Calu3 (cell line): ENCODE measurements at regions of chr3 and their contacts with region 1.

Region 1: GRCh38 chr3:156509189-156510174 is 45.4 kb downstream of the SSR3 start:
- DNase-seq: peak; percentile 22
- H3K4me3 Mint-ChIP-seq: no peak overlapping the region
- H3K27ac Mint-ChIP-seq: no peak overlapping the region
- H3K4me1 Mint-ChIP-seq: no peaks in the 10 kb centered on the region
- H3K27me3 Mint-ChIP-seq: peaks cover 16% of the 10 kb centered on the region
- CTCF ChIP-seq: peak; percentile 22

Region 2: GRCh38 chr3:155995525-155996351 is 513.7 kb before region 1 on chr3:
- CTCF ChIA-PET with region 1: no interaction called
- intact Hi-C with region 1: loop called (anchors 5 kb)
- DNase-seq: no peak
- H3K4me3 Mint-ChIP-seq: no peak overlapping the region
- H3K27ac Mint-ChIP-seq: no peak overlapping the region
- H3K4me1 Mint-ChIP-seq: peaks cover 7% of the 10 kb centered on the region
- H3K27me3 Mint-ChIP-seq: peaks cover 12% of the 10 kb centered on the region
- CTCF ChIP-seq: peak; percentile 36

Region 3: GRCh38 chr3:156174229-156174847 is 335.1 kb before region 1 on chr3:
- CTCF ChIA-PET with region 1: interaction called, 14 read pairs
- intact Hi-C with region 1: loop called (anchors 1 kb)
- DNase-seq: no peak
- H3K4me3 Mint-ChIP-seq: no peak overlapping the region
- H3K27ac Mint-ChIP-seq: no peak overlapping the region
- H3K4me1 Mint-ChIP-seq: no peaks in the 10 kb centered on the region
- H3K27me3 Mint-ChIP-seq: peaks cover 66% of the 10 kb centered on the region
- CTCF ChIP-seq: peak; percentile 9

Region 4: DNA sequence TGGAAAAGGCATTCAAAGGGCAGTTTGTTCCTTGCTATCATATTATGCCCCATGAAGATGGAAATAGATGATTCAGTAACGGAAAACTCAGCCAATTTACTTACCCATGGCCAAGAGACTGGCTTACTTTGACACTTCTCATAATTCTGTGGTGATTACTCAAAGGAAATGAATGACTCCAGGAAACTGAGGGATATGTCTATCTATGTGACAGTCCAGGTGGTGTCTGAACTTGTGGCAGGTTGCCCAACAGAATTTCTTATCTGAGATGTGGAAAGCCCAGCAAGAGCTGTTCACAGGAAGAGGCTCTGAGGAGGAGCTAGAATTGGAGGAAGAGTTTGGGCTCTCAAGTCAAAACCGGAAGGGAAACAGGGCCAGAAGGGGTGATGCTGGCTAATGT is 297.9 kb before region 1 on chr3:
- CTCF ChIA-PET with region 1: no interaction called
- intact Hi-C with region 1: no loop called
- DNase-seq: no peak
- H3K4me3 Mint-ChIP-seq: no peak overlapping the region
- H3K27ac Mint-ChIP-seq: no peak overlapping the region
- H3K4me1 Mint-ChIP-seq: no peaks in the 10 kb centered on the region
- H3K27me3 Mint-ChIP-seq: peaks cover 49% of the 10 kb centered on the region
- CTCF ChIP-seq: no peak

Region 5: DNA sequence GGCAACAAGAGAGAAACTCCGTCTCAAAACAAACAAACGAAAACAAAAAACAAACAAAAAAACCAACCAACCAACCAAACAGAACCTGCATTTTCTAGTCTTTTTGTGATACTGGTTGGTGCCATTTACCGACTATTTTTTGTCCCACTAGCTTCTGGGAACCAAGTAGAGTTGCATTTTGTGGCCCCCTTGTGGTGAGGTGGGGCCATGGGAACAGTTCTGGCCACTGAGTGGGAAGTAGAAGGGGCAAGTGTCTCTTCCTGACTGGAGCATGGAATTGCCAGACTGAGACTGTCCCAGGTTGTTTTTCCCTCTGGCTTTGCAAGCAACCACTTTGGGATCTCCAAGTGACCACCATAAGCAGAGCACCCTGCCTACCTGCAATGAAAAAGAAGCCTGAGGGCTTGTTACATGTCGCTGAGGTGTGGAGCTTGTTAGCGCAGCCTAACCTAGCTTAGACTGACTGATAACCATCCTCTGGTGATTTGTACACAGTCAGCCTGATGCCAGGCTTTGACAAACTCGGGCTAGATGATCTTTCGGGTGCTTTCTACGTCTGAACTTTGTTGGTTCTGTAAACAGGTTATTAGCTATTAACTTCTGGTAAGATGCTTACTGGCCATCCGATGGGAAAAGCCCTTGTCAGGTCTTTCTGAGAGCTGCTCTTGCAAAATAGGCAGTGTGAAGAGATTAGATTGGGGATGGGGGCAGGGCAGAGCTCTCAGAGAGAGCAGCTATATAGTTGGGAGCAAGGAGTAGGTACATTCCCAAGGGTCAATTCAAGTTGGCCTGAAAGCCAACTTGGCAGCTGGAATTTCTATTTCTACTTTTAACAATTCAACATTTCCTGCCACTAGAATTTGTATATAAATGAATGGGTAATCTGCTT is 126.8 kb before region 1 on chr3:
- CTCF ChIA-PET with region 1: interaction called, 12 read pairs
- intact Hi-C with region 1: loop called (anchors 5 kb)
- DNase-seq: peak; percentile 82
- H3K4me3 Mint-ChIP-seq: no peak overlapping the region
- H3K27ac Mint-ChIP-seq: no peak overlapping the region
- H3K4me1 Mint-ChIP-seq: no peaks in the 10 kb centered on the region
- H3K27me3 Mint-ChIP-seq: peaks cover 80% of the 10 kb centered on the region
- CTCF ChIP-seq: peak; percentile 94

Region 6: DNA sequence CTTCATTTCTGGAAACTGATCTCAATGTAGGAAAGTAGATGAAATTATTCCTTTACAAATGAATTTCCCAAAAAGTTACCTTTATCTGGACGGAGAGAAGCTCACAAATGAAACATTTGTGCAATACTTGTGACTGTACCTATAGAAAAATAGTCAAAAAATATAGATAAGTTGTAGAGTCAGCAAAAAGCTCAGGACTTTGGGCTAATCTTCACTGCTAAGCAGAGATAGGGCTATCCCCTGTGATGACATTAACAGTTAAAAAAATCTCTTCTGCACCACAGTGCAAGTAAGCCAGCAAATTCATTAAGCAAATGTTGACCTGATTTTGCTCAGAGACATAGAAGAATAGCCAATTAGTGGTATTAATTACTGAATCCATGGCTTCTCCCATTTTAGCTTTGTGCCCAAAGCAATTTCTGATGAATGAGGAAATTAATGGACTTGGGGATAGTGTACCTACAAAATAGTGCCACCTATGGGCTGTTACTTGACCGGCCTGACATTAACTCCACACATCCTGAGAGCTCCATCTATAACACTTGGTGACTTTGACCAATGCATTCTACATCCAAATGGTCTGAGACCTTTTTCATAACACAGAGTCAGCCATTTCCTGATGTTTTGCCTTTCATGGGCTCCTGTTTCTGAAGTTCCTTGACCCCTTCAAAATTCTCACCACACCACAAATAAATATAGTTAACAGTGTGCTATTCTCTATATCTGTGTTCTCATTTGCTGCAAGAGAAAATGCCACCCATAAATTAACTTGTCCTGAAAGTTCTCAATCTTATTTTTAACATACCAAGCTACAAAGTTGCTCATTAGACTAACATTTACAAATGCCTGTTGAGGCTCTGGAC is 59.5 kb before region 1 on chr3:
- CTCF ChIA-PET with region 1: interaction called, 12 read pairs
- intact Hi-C with region 1: loop called (anchors 1 kb)
- DNase-seq: peak; percentile 39
- H3K4me3 Mint-ChIP-seq: no peak overlapping the region
- H3K27ac Mint-ChIP-seq: no peak overlapping the region
- H3K4me1 Mint-ChIP-seq: no peaks in the 10 kb centered on the region
- H3K27me3 Mint-ChIP-seq: no peaks in the 10 kb centered on the region
- CTCF ChIP-seq: peak; percentile 61

Region 7: DNA sequence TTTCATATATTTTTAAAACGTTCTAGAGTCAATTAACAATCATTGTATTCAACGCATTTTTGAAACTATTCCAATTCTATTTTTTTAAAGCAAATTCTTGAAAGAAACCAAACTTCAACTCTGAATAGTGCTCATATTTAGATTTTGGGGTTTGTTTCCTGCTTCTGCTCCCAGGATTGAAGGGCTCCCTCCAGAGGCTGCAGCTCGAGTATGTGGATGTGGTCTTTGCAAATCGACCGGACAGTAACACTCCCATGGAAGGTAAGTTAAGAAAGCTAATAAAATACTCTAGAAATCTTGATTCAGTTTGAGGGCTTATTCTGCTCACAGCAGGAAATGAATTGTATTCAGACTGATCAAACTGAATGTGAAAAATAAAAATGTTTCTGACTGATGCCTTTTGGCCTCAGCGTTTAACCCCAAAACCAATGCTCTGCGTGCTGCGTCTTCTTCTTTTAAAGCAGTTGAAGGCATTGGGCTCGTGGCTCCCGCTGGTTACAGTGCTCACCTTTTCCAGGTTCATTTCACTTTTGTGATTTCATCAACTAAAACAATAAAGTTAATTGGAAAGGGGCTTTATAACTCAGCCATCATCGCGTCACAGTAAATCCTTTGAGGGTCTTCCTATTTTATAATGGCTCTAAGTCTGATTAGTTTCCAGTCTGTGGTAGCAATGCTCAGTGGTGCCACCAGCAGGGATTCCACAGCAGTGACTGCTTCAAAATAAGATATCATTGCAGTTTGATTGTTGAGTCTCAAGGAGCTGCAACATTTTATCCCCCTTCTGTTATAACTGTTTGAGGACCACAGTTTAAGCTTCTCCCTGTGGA is 34.7 kb before region 1 on chr3:
- CTCF ChIA-PET with region 1: no interaction called
- intact Hi-C with region 1: loop called (anchors 1 kb)
- DNase-seq: no peak
- H3K4me3 Mint-ChIP-seq: no peak overlapping the region
- H3K27ac Mint-ChIP-seq: no peak overlapping the region
- H3K4me1 Mint-ChIP-seq: peaks cover 17% of the 10 kb centered on the region
- H3K27me3 Mint-ChIP-seq: no peaks in the 10 kb centered on the region
- CTCF ChIP-seq: peak; percentile 53

Region 8: GRCh38 chr3:156615592-156616173 is 106.2 kb after region 1 on chr3:
- CTCF ChIA-PET with region 1: no interaction called
- intact Hi-C with region 1: no loop called
- DNase-seq: no peak
- H3K4me3 Mint-ChIP-seq: no peak overlapping the region
- H3K27ac Mint-ChIP-seq: no peak overlapping the region
- H3K4me1 Mint-ChIP-seq: peaks cover 26% of the 10 kb centered on the region
- H3K27me3 Mint-ChIP-seq: no peaks in the 10 kb centered on the region
- CTCF ChIP-seq: no peak